Left cardiac atrium (tissue), 4 donors: ENCODE measurements at regions of chr12 and their contacts with region 1.

Region 1: GRCh38 chr12:8949342-8950220 is at the start of gene M6PR:
- DNase-seq: peak; percentile 95
- ATAC-seq: peak; percentile 95 to 97
- total RNA-seq, gene M6PR: 90.0 to 104 TPM

Region 2: DNA sequence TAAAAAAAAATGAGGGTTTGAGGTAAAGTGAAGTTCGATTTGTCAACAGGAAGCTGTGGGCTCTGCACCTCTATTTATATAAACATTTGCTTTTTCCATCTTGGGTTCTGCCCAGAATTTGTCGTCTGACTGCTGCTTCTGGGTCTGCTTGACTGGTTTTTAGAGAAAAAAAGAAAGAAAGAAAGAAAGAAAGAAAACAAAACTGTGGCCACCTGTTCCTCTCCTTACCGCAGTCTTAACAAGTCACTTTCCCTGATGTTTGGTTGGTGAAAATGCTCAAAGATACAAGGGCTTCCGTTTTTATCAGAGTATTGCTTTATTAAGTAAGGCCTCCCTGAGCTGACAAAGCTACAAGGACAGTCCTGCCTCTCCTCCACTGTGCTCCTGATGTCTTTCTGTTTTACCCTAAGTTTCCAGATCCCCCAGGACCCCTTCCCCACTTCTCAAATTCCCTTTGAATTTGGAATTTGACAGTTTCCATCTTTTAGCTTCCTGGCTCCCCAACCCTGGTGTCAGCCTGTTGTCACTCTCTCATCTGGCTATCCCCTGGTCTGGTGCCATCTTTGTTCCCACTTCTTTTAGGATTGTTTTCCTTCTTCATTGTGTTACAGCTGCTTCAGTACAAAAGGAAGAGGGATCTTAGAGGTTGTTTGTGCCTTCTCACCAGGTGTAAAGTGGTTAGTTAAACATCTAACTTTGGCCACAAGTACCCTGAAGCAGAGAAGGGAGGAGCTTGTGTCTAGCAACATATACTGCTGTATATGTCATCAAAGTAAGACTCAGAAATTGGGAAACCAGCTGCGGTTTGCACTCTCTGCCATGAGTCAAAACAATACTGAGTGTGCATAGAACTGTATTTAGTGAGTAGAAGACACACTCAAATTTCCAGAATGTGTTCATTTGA is 305.0 kb before region 1 on chr12:
- intact Hi-C with region 1: no loop called
- DNase-seq: no peak
- ATAC-seq: peak in 1 of 2 donors; percentile 27

Region 3: GRCh38 chr12:9039397-9039977 is 89.9 kb after region 1 on chr12:
- intact Hi-C with region 1: loop called (anchors 5 to 10 kb)
- DNase-seq: no peak
- ATAC-seq: peak; percentile 68 to 73